Transverse colon (tissue), 4 donors: ENCODE measurements at regions of chr14 and their contacts with region 1.

Region 1: DNA sequence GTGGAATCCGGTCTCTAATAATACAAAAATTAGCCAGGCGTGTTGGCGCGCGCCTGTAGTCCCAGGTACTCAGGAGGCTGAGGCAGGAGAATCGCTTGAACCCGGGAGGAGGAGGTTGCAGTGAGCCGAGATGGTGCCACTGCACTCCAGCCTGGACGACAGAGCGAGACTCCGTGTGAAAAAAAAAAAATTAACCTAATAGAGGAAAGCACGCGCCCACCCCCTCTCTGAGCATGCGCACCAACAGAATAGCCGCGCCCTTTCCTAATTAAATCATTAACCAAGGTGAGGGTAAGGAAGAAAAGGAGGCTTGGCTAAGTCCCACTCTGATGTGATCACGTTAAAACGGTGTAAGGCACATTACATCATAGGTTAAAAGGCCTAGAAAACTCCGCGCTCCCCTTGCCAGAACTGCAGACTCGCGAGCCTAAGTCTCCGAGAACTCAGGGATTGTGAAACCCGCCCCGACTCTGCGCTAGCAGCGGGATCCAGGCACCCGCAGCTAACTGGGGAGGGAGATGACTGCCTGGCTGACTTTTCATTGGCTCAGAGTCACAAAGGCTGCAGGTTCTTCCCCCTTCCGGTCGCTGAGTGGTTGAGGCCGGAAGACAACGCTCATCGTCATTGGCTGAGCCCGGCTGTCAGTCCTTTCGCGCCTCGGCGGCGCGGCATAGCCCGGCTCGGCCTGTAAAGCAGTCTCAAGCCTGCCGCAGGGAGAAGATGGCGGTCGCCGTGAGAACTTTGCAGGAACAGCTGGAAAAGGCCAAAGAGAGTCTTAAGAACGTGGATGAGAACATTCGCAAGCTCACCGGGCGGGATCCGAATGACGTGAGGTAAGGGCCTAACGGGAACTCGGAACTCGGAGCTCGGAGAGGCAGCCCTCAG is at the start of gene PNN:
- DNase-seq: peak; percentile 97
- H3K4me3 ChIP-seq: peak within 1 kb of the TSS; percentile 73 to 97 (median 90)
- H3K27ac ChIP-seq: peak within 1 kb of the TSS; percentile 91 to 98 (median 94)
- H3K4me1 ChIP-seq: peaks cover 11 to 23% (median 17%) of the 10 kb centered on the region in 4 donors
- H3K27me3 ChIP-seq: no peaks in the 10 kb centered on the region
- CTCF ChIP-seq: peak in 1 of 5 experiments; percentile 25
- EP300 ChIP-seq: no peak
- POLR2A ChIP-seq: peak; percentile 98
- total RNA-seq, gene PNN: 33.0 to 159 (median 76.2) TPM

Region 2: GRCh38 chr14:39102969-39103957 is 71.5 kb before region 1 on chr14 and contains the start of gene SEC23A:
- in situ Hi-C with region 1: loop called in 1 of 4 experiments (anchors 10 kb)
- intact Hi-C with region 1: no loop called
- DNase-seq: peak; percentile 94
- H3K4me3 ChIP-seq: peak within 1 kb of the TSS; percentile 64 to 87 (median 70)
- H3K27ac ChIP-seq: peak within 1 kb of the TSS; percentile 95 to 100 (median 96)
- H3K4me1 ChIP-seq: peaks cover 13 to 51% (median 36%) of the 10 kb centered on the region in 4 donors
- H3K27me3 ChIP-seq: no peaks in the 10 kb centered on the region
- CTCF ChIP-seq: peak in 1 of 5 experiments; percentile 5
- EP300 ChIP-seq: no peak
- POLR2A ChIP-seq: peak; percentile 94
- total RNA-seq, gene SEC23A: 88.6 to 290 (median 162) TPM

Region 3: DNA sequence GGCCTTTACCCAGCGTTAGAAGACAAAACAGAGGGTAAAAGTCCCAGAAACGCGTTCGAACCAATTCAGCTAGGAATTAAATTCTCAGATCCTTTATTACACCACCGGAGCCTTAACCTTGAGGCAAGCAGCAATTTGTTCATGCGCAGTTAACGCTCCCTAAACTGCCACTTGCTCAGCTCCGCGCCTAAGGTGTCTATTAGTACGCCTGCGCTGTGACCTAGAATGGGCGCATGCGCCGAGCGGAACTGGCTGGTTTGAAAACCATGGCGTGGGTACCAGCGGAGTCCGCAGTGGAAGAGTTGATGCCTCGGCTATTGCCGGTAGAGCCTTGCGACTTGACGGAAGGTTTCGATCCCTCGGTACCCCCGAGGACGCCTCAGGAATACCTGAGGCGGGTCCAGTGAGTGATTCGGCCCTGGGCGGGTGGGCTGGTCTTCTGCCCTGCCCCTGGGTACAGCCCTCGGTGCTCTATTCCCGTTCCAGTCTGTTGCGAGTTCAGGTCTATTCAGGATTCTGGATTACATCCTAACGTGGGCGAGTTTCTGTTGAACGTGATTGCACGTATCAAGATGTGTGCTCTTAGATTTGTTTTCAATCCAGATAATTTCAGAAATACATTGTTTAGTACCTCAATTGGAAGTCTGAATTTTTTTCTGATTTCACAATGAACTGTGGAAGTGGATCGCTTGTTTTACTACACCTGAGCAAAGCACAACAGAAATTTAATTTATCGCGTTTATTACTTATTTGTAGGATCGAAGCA is 60.5 kb before region 1 on chr14 and contains the start of gene GEMIN2:
- in situ Hi-C with region 1: loop called in 2 of 4 experiments (anchors 10 kb)
- intact Hi-C with region 1: no loop called
- DNase-seq: peak; percentile 95
- H3K4me3 ChIP-seq: peak within 1 kb of the TSS; percentile 51 to 79 (median 72)
- H3K27ac ChIP-seq: peak within 1 kb of the TSS; percentile 83 to 87 (median 84)
- H3K4me1 ChIP-seq: peaks cover 6 to 12% (median 10%) of the 10 kb centered on the region in 4 donors
- H3K27me3 ChIP-seq: no peaks in the 10 kb centered on the region
- CTCF ChIP-seq: no peak
- EP300 ChIP-seq: no peak
- POLR2A ChIP-seq: peak; percentile 58
- total RNA-seq, gene GEMIN2: 11.5 to 75.0 (median 20.0) TPM in 3 of 4 donors, not detected in the other

Region 4: DNA sequence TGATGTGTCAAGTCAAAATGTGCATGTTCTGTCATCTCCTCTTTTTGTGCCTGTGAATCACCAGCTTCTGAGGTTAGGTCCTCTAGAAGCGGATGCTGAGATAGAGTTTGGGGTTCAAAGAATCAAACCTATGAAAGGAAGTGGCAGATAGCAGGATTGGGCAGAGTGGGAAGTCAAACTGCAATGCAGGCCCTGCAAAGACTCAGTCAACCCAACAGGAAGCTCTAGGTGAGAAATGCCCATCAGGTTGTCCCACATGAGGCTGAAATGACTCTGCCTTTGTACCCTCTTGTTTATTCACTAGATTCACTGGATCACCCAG is 54.4 kb after region 1 on chr14:
- in situ Hi-C with region 1: no loop called
- intact Hi-C with region 1: no loop called
- DNase-seq: no peak
- H3K4me3 ChIP-seq: no peak overlapping the region
- H3K27ac ChIP-seq: no peak overlapping the region
- H3K4me1 ChIP-seq: peaks cover 0 to 14% (median 4%) of the 10 kb centered on the region in 4 donors
- H3K27me3 ChIP-seq: no peaks in the 10 kb centered on the region
- CTCF ChIP-seq: no peak
- EP300 ChIP-seq: no peak
- POLR2A ChIP-seq: no peak

Region 5: GRCh38 chr14:39266871-39267591 is 92.2 kb after region 1 on chr14:
- in situ Hi-C with region 1: no loop called
- intact Hi-C with region 1: loop called (anchors 5 kb)
- DNase-seq: peak; percentile 89
- H3K4me3 ChIP-seq: peak overlapping the region; percentile 70 to 95 (median 80)
- H3K27ac ChIP-seq: peak overlapping the region; percentile 92 to 99 (median 96)
- H3K4me1 ChIP-seq: peaks cover 8 to 42% (median 22%) of the 10 kb centered on the region in 4 donors
- H3K27me3 ChIP-seq: no peaks in the 10 kb centered on the region
- CTCF ChIP-seq: no peak
- EP300 ChIP-seq: no peak
- POLR2A ChIP-seq: peak; percentile 77

Region 6: DNA sequence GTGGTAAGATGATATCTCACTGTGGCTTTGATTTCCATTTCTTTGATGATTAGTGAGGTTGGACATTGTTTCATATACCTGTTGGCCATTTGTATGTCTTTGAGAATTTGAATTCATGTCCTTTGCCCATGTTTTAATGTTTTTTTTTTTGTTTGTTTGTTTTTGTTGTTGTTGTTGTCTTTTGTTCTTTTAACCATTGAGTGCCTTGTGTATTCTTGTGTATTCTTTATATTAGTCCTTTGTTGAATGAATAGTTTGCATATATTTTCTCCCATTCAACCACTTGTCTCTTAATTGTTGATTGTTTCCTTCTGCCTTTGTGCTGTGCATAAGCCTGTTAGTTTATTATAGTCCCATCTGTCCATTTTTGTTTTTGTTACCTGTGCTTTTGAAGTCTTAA is 185.5 kb after region 1 on chr14:
- in situ Hi-C with region 1: no loop called
- intact Hi-C with region 1: no loop called
- DNase-seq: no peak
- H3K4me3 ChIP-seq: no peak overlapping the region
- H3K27ac ChIP-seq: no peak overlapping the region
- H3K4me1 ChIP-seq: no peaks in the 10 kb centered on the region
- H3K27me3 ChIP-seq: no peaks in the 10 kb centered on the region
- CTCF ChIP-seq: no peak
- EP300 ChIP-seq: no peak
- POLR2A ChIP-seq: no peak

Region 7: GRCh38 chr14:39432179-39432618 is 257.4 kb after region 1 on chr14 and contains the start of gene FBXO33:
- in situ Hi-C with region 1: loop called in 1 of 4 experiments (anchors 10 kb)
- intact Hi-C with region 1: no loop called
- DNase-seq: peak; percentile 98
- H3K4me3 ChIP-seq: peak within 1 kb of the TSS; percentile 69 to 95 (median 82)
- H3K27ac ChIP-seq: peak within 1 kb of the TSS; percentile 96 to 97 (median 97)
- H3K4me1 ChIP-seq: peaks cover 15 to 42% (median 22%) of the 10 kb centered on the region in 4 donors
- H3K27me3 ChIP-seq: no peaks in the 10 kb centered on the region
- CTCF ChIP-seq: no peak
- EP300 ChIP-seq: no peak
- POLR2A ChIP-seq: no peak
- total RNA-seq, gene FBXO33: 4.5 to 12.1 (median 9.7) TPM

Region 8: DNA sequence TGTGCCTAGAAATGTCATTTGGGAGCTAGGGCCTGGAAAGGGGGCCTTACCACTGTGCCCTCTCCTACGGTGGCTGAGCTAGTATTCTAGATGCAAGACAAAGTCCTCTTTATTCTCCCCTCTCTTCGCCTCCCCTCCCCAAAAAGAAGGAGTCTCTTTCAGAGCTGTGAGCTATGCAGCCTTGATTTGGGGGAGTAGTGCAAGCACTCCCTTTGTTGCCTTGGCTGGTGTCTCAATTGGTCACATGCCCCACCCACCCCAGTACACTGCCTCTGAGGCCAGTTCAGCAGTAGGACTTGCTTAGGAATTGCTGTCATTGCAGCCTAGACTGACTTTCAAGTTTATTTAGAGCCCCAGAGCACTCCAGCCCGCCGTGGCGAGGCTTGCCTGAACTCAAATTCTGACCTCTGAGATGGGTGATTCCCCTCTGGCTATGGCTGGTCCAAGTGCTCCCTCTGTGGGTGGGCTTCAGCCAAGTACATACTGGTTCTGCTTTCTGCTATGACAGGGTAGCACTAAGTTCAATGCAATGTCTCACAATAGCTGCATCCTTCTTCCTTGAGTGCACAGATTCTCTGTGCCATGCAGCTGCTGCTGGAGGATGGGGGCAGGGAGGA is 294.4 kb after region 1 on chr14:
- in situ Hi-C with region 1: no loop called
- intact Hi-C with region 1: no loop called
- DNase-seq: peak; percentile 26
- H3K4me3 ChIP-seq: no peak overlapping the region
- H3K27ac ChIP-seq: no peak overlapping the region
- H3K4me1 ChIP-seq: no peaks in the 10 kb centered on the region
- H3K27me3 ChIP-seq: no peaks in the 10 kb centered on the region
- CTCF ChIP-seq: no peak
- EP300 ChIP-seq: no peak
- POLR2A ChIP-seq: no peak